B cell (primary cell): ENCODE measurements at regions of chr13 and their contacts with region 1.

Region 1: GRCh38 chr13:112606109-112607001 is 18.4 kb upstream of the TUBGCP3 start:
- DNase-seq: peak; percentile 87
- ATAC-seq: peak; percentile 100
- H3K4me3 ChIP-seq: peak overlapping the region; percentile 35 to 68 (median 58)
- H3K4me3 Mint-ChIP-seq: peak overlapping the region; percentile 87
- H3K27ac ChIP-seq: no peak overlapping the region
- H3K27ac Mint-ChIP-seq: no peak overlapping the region
- H3K4me1 ChIP-seq: peaks cover 5 to 9% of the 10 kb centered on the region in 2 donors
- H3K4me1 Mint-ChIP-seq: peaks cover 8% of the 10 kb centered on the region
- H3K27me3 ChIP-seq: peaks cover 0 to 14% (median 5%) of the 10 kb centered on the region in 4 experiments
- H3K27me3 Mint-ChIP-seq: peaks cover 34% of the 10 kb centered on the region
- CTCF ChIP-seq: peak; percentile 99

Region 2: GRCh38 chr13:111474136-111475002 is 1132.0 kb before region 1 on chr13:
- CTCF ChIA-PET with region 1: interaction called, 24 read pairs
- POLR2A ChIA-PET with region 1: no interaction called
- intact Hi-C with region 1: no loop called
- DNase-seq: peak; percentile 29
- ATAC-seq: no peak
- H3K4me3 ChIP-seq: no peak overlapping the region
- H3K4me3 Mint-ChIP-seq: no peak overlapping the region
- H3K27ac ChIP-seq: no peak overlapping the region
- H3K27ac Mint-ChIP-seq: no peak overlapping the region
- H3K4me1 ChIP-seq: no peaks in the 10 kb centered on the region
- H3K4me1 Mint-ChIP-seq: no peaks in the 10 kb centered on the region
- H3K27me3 ChIP-seq: no peaks in the 10 kb centered on the region
- H3K27me3 Mint-ChIP-seq: no peaks in the 10 kb centered on the region
- CTCF ChIP-seq: peak; percentile 22

Region 3: DNA sequence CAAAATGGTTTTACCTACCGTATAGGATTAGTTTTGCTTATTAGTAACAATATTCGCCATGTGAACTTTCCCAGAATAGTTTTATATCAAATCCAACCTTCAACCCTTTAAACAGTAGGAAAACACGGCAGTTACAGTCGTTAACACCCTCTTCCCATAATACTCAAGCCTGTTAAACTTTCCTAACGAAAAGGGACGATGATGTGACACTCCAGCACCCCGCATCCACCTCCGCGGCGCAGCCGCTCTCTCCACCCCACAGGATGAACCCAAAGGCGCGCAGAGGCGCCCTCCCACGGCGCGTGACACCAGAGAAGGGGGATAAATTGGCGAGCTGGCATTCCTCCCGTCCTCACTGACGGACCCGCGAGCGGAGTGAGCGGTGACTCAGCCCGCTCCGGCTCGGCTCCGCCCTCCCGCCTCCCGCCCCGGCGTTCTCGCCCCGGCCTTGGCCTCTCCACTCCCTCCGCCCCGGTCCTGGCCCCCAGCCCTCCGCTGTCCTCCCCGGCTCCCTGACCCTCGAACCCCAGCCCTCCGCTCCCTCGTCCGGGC is 19.1 kb before region 1 on chr13:
- CTCF ChIA-PET with region 1: interaction called, 18 read pairs
- POLR2A ChIA-PET with region 1: no interaction called
- intact Hi-C with region 1: loop called (anchors 1 kb)
- DNase-seq: peak; percentile 64
- ATAC-seq: peak; percentile 50
- H3K4me3 ChIP-seq: peak overlapping the region; percentile 83 to 96 (median 92)
- H3K4me3 Mint-ChIP-seq: peak overlapping the region; percentile 97
- H3K27ac ChIP-seq: peak overlapping the region; percentile 55 to 76
- H3K27ac Mint-ChIP-seq: peak overlapping the region; percentile 93
- H3K4me1 ChIP-seq: peaks cover 35 to 38% of the 10 kb centered on the region in 2 donors
- H3K4me1 Mint-ChIP-seq: peaks cover 46% of the 10 kb centered on the region
- H3K27me3 ChIP-seq: no peaks in the 10 kb centered on the region
- H3K27me3 Mint-ChIP-seq: no peaks in the 10 kb centered on the region
- CTCF ChIP-seq: no peak

Region 4: DNA sequence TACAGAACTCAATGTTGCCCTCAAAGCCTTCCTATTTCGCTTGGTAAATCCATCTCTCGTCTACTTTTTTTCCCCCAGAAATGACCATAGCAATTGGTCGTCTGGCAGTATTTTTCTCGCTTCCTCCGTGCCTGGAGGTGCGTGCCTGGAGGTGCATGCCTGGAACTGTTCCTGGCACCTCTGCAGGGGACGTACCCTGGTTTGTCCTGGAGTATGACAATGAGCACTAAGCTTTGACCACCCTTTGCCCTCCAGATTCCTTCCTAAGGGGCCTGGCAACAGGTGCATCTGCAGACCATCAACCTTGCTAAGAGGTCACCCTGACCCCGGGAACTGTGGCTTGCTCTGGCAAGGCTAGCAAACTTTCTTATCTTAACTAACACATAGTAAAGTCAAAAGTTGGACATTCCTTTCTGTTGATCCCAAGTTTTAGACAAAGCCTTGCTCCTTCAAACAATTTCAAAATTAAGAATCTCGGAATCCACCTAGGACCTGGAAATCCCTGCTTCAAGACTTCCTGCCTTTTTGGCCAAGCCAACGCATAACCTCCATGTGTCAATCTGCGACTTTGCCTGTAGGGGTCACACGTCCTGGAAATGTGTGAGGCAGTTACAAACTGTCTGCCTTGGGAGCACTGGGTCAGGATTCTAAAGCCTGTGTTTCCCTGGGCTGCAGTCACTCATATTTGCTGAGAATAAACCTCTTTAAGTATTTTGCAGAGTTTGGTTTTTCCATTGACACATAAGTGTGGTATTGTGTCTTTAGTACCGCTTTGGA is 10.4 kb after region 1 on chr13:
- CTCF ChIA-PET with region 1: interaction called, 10 read pairs
- POLR2A ChIA-PET with region 1: no interaction called
- intact Hi-C with region 1: no loop called
- DNase-seq: peak; percentile 27
- ATAC-seq: no peak
- H3K4me3 ChIP-seq: no peak overlapping the region
- H3K4me3 Mint-ChIP-seq: no peak overlapping the region
- H3K27ac ChIP-seq: no peak overlapping the region
- H3K27ac Mint-ChIP-seq: no peak overlapping the region
- H3K4me1 ChIP-seq: peaks cover 0 to 4% of the 10 kb centered on the region in 2 donors
- H3K4me1 Mint-ChIP-seq: peaks cover 5% of the 10 kb centered on the region
- H3K27me3 ChIP-seq: peaks cover 0 to 13% (median 2%) of the 10 kb centered on the region in 4 experiments
- H3K27me3 Mint-ChIP-seq: peaks cover 29% of the 10 kb centered on the region
- CTCF ChIP-seq: peak; percentile 65